IMR-90 (cell line): ENCODE measurements at regions of chr15 and their contacts with region 1.

Region 1: GRCh38 chr15:81966631-81967030 is 79.2 kb downstream of the MEX3B start:
- DNase-seq: peak; percentile 29
- ATAC-seq: peak; percentile 24; the same call in 1 of the 2 replicates
- H3K4me3 ChIP-seq: no peak overlapping the region
- H3K27ac ChIP-seq: no peak overlapping the region
- H3K4me1 ChIP-seq: no peaks in the 10 kb centered on the region
- H3K27me3 ChIP-seq: no peaks in the 10 kb centered on the region; the same call in 1 of the 2 replicates
- CTCF ChIP-seq: no peak
- POLR2A ChIP-seq: no peak
- RAD21 ChIP-seq: no peak

Region 2: DNA sequence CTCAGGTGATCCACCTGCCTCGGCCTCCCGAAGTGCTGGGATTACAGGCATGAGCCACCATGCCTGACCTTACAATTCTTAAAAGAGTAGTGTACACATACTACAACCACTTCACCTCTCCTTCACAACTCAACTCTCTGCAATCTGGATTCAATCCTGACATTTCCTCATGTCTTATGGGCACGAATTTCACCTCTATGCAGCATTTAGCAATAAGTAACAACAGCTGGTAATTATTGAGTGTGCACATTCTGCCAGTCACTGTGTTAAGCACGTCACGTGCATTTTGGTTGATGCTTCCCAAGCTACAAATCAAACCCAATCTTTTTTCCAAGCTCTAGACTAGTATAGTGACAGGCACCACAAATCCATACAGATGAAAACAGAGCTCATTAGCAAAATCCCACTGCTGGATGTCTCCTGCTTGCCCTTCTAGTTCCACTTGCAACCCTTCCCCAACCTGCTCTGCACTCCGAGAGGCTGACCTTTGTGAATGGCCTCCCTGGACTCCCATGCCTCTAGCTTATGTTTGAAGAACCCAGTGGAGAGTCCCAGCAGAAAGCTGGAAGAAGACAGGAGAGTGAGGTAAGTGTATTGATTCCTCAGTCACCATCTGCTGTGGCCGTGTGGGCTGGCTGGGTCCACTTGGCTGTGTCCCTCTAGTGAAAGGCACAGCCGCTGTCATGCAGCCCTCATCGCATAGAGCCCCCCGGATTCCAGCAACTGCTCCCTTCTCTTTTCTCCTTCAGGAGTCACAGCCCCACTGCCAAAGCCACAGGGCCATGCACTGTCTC is 97.3 kb before region 1 on chr15:
- CTCF ChIA-PET with region 1: no interaction called
- POLR2A ChIA-PET with region 1: no interaction called
- dilution Hi-C with region 1: no loop called
- in situ Hi-C with region 1: no loop called
- intact Hi-C with region 1: no loop called
- DNase-seq: no peak
- ATAC-seq: no peak
- H3K4me3 ChIP-seq: no peak overlapping the region
- H3K27ac ChIP-seq: no peak overlapping the region
- H3K4me1 ChIP-seq: no peaks in the 10 kb centered on the region
- H3K27me3 ChIP-seq: peaks cover 2% of the 10 kb centered on the region
- CTCF ChIP-seq: no peak
- POLR2A ChIP-seq: no peak
- RAD21 ChIP-seq: no peak

Region 3: DNA sequence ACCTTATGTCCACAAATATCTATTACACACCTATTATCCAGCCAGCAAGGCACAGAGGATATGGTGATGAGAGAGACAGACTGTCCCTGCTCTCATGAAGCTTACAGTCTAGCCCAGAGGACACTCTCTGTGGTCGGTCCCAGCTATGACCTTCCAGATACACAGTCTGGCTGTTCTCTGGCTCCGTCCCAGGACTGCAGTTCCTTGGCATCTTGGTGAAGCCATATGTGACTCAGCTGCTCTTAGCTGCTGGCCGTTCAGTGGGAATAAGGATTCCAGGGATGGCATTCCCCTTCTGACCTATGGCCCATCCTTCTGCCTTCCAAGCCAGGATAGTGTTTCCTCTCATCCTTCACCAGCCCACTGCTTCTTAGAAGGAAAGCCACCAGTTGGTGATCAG is 48.4 kb after region 1 on chr15:
- CTCF ChIA-PET with region 1: no interaction called
- POLR2A ChIA-PET with region 1: no interaction called
- dilution Hi-C with region 1: no loop called
- in situ Hi-C with region 1: no loop called
- intact Hi-C with region 1: loop called (anchors 5 kb)
- DNase-seq: peak; percentile 4
- ATAC-seq: no peak
- H3K4me3 ChIP-seq: no peak overlapping the region
- H3K27ac ChIP-seq: no peak overlapping the region
- H3K4me1 ChIP-seq: no peaks in the 10 kb centered on the region
- H3K27me3 ChIP-seq: peaks cover 7% of the 10 kb centered on the region
- CTCF ChIP-seq: no peak
- POLR2A ChIP-seq: no peak
- RAD21 ChIP-seq: no peak